Right ventricle myocardium inferior (tissue), 1 donor: ENCODE measurements at regions of chr7 and their contacts with region 1.

Region 1: DNA sequence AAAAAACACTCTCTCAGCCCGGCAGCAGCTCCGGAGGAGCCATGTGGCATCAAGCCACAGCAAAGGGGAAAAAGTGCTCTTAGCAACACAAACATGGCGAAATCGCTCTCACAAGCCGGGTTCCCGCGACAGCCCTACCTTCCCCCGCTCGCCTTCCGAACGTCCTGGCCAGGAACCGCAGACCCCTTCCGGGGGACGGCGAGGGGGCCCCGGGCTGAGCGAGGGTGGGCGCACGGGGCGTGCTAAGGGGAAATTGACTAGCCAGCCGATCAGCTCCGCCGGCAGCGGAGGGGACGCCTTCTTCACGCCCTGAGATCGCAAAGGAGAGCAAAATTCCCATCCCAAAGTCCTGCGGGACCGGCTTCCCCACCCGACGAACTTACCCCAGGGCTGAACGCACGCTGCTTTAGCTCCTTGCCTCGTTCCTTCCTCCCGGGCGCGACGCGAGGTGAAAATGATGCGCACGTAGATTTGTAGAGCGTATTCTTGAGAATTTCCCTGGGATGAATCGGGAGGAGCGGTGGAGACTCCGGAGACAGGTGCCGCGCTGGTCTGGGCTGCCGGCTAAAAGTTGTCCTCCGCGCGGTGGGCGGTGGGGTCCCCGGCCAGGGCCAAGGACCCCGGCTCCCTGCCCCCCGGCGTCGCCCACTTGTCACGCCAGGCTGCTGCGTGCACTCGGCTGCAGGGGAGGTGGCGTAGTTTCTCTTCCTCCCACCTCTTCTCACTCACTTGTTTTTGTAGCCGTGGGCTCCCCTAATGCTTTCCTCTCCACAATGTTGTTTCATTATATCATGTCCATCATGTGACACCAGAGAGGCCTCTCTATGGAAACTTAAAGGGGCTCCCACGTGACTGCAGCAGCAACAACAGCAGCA is 220.1 kb upstream of the MKLN1 start:
- DNase-seq: peak; percentile 80
- ATAC-seq: peak; percentile 51

Region 2: GRCh38 chr7:130205084-130205947 is 902.3 kb before region 1 on chr7 and contains the start of gene TMEM209:
- intact Hi-C with region 1: no loop called
- DNase-seq: peak; percentile 96
- ATAC-seq: peak; percentile 99
- total RNA-seq, gene TMEM209: 8.6 TPM

Region 3: GRCh38 chr7:131071786-131072504 is 35.6 kb before region 1 on chr7:
- intact Hi-C with region 1: loop called (anchors 2 kb)
- DNase-seq: no peak
- ATAC-seq: peak; percentile 38

Region 4: DNA sequence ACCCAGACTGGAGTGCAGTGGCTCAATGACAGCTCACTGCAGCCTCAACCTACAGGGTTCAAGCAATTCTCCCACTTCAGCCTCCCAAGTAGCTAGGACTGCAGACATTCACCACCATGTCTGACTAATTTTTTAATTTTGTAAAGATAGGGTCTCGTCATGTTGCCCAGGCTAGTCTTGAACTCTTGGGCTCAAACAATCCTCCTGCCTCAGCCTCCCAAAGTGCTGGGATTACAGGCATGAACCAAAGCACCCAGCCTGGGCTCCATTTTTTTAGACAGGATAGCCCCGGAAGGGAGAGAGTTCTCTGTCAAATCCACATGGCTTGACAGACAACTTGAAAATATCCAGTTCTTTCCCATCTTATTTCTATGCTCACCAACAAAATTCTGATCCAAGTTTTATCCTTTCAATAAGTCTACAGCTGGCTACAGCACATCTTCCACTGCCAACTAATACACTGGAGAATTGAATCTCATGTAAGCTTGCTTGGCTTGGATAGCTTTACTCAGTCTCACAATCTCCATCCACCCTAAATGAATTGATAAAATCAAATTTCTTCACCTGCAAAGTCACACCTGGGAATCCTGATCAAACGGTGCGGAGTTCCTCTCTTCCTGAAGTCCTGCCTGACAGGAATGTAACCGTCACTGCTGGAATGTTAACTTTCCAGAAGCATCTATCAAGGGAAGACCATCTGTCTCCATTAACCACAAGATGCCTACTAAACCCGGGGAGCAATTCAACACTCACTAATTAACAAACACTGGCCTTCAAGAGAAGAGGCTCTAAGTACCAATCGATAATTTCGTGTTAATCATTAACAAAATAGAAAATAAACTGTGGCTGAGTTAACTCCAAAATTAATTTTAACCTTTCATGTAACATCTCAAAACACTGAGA is 19.6 kb before region 1 on chr7:
- intact Hi-C with region 1: no loop called
- DNase-seq: no peak
- ATAC-seq: peak; percentile 58

Region 5: GRCh38 chr7:131188367-131189339 is 81.1 kb after region 1 on chr7:
- intact Hi-C with region 1: loop called (anchors 2 kb)
- DNase-seq: no peak
- ATAC-seq: no peak

Region 6: DNA sequence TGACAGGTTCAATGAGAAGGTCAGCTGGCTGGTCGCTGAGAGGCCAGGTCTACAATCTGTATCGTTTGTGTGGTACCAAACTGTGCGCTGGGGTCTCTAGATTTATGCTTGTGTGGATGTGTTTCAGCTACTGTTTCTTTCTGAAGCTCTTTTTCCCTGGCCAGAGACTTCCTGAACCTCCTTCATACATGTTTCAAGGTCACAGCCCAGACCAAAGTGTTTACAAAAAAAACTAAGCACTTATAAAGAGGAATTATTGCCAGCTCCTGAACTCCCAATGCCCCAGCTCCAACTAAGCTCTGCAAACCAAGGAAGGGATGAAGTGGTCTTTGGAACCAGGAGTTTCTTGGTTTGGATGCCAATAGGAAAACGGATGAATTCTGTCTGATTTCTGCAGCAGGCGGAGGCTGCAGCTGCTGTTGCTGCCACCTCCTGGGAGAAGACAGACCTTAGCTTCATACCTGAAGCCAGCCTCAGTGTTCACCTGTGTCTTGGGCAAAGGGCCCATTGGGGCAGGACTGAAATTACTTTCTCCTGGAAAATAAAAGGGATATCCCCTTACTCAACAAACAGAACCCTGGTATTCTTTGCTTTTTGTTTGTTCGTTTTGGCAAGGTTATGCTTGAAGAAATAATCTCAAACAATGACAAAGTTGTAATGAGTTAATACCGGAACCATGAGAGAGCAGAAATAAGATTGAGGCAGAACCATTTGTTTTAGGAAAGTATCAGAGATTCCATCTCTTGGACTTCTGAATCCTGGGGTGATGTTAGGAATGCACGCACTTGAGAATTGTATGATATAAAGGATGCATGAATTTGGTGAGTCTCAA is 195.5 kb after region 1 on chr7:
- intact Hi-C with region 1: loop called (anchors 2 kb)
- DNase-seq: no peak
- ATAC-seq: peak; percentile 64

Region 7: GRCh38 chr7:131424219-131424822 is 316.7 kb after region 1 on chr7:
- intact Hi-C with region 1: loop called (anchors 5 kb)
- DNase-seq: no peak
- ATAC-seq: peak; percentile 61